Activated CD8-positive, alpha-beta T cell treated with anti-CD3 and anti-CD28 coated beads, Interleukin-2, amount 10 ng/mL, durations not matched to agents 7 days and 5 days (primary cell): ENCODE measurements at regions of chr1 and their contacts with region 1.

Region 1: GRCh38 chr1:66436378-66437145 is 97.4 kb upstream of the SGIP1 start:
- DNase-seq: peak; percentile 64
- ATAC-seq: peak; percentile 86
- H3K4me3 Mint-ChIP-seq: no peak overlapping the region
- H3K27ac Mint-ChIP-seq: no peak overlapping the region
- H3K4me1 Mint-ChIP-seq: peaks cover 36% of the 10 kb centered on the region
- H3K27me3 Mint-ChIP-seq: no peaks in the 10 kb centered on the region

Region 2: GRCh38 chr1:66258404-66259105 is 178.0 kb before region 1 on chr1:
- CTCF ChIA-PET with region 1: interaction called, 703 read pairs
- POLR2A ChIA-PET with region 1: no interaction called
- DNase-seq: no peak
- ATAC-seq: no peak
- H3K4me3 Mint-ChIP-seq: no peak overlapping the region
- H3K27ac Mint-ChIP-seq: no peak overlapping the region
- H3K4me1 Mint-ChIP-seq: peaks cover 52% of the 10 kb centered on the region
- H3K27me3 Mint-ChIP-seq: no peaks in the 10 kb centered on the region

Region 3: DNA sequence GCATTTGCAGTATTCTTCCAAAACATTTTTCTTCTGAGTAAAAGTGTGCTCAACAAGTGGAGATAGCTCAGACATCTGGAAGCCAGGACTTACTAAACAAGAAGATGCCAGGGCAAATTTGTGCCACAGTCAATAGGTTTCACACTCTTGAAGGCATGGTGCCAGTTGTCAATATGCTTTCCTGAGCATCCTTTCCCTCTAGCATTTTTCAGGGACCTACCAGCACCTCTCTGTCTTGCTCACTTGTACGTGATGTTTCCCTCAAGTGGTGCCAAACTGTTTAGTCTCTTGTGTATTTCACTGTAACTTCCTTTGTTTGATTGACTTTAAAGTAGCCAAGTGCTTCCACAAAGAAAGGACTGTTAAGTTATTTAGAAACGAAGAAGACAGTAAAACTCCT is 96.6 kb before region 1 on chr1:
- CTCF ChIA-PET with region 1: interaction called, 17 read pairs
- POLR2A ChIA-PET with region 1: interaction called, 3 read pairs
- DNase-seq: no peak
- ATAC-seq: no peak
- H3K4me3 Mint-ChIP-seq: peak overlapping the region; percentile 61
- H3K27ac Mint-ChIP-seq: peak overlapping the region; percentile 79
- H3K4me1 Mint-ChIP-seq: peaks cover 80% of the 10 kb centered on the region
- H3K27me3 Mint-ChIP-seq: no peaks in the 10 kb centered on the region

Region 4: DNA sequence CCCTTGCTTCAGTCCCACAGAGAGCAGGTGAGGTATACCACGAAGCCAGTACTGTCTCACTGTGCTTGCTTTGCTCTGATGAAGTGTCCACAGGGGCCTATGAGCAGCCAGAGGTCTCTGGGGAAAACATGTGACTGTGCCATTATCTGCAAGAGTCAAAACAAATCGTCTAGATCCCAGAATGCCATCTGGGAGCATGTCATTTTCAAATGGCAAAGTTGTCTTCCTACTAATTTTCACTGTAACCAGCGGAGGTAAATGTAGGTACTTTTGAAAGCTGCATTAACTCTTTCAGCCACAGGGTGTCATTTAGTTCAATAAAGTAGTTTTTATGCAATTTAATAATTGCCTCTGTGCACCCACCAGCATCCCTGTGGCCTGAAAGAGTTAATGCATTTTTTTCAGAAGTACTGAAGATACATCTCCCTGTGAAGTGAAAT is 76.3 kb before region 1 on chr1:
- CTCF ChIA-PET with region 1: interaction called, 43 read pairs
- POLR2A ChIA-PET with region 1: no interaction called
- DNase-seq: no peak
- ATAC-seq: no peak
- H3K4me3 Mint-ChIP-seq: no peak overlapping the region
- H3K27ac Mint-ChIP-seq: no peak overlapping the region
- H3K4me1 Mint-ChIP-seq: peaks cover 62% of the 10 kb centered on the region
- H3K27me3 Mint-ChIP-seq: no peaks in the 10 kb centered on the region

Region 5: GRCh38 chr1:66374561-66375111 is 61.9 kb before region 1 on chr1:
- CTCF ChIA-PET with region 1: interaction called, 45 read pairs
- POLR2A ChIA-PET with region 1: interaction called, 3 read pairs
- DNase-seq: no peak
- ATAC-seq: peak; percentile 49
- H3K4me3 Mint-ChIP-seq: peak overlapping the region; percentile 49
- H3K27ac Mint-ChIP-seq: peak overlapping the region; percentile 89
- H3K4me1 Mint-ChIP-seq: peaks cover 53% of the 10 kb centered on the region
- H3K27me3 Mint-ChIP-seq: no peaks in the 10 kb centered on the region